ENCODE measurements at regions of chr17 and their contacts with region 1.

Region 1: GRCh38 chr17:29180034-29180787 is at the start of gene MYO18A:
- DNase-seq: peak; percentile 83
- ATAC-seq: peak; percentile 94
- H3K4me3 Mint-ChIP-seq: peak within 1 kb of the TSS; percentile 51
- H3K27ac Mint-ChIP-seq: no peak within 1 kb of the TSS
- H3K4me1 Mint-ChIP-seq: peaks cover 38% of the 10 kb centered on the region
- H3K27me3 Mint-ChIP-seq: peaks cover 10% of the 10 kb centered on the region
- total RNA-seq, gene MYO18A: 53.4 to 53.8 TPM

Region 2: GRCh38 chr17:28937044-28937729 is 243.0 kb before region 1 on chr17:
- CTCF ChIA-PET with region 1: no interaction called
- POLR2A ChIA-PET with region 1: no interaction called
- DNase-seq: no peak
- ATAC-seq: no peak
- H3K4me3 Mint-ChIP-seq: no peak overlapping the region
- H3K27ac Mint-ChIP-seq: no peak overlapping the region
- H3K4me1 Mint-ChIP-seq: peaks cover 62% of the 10 kb centered on the region
- H3K27me3 Mint-ChIP-seq: no peaks in the 10 kb centered on the region

Region 3: DNA sequence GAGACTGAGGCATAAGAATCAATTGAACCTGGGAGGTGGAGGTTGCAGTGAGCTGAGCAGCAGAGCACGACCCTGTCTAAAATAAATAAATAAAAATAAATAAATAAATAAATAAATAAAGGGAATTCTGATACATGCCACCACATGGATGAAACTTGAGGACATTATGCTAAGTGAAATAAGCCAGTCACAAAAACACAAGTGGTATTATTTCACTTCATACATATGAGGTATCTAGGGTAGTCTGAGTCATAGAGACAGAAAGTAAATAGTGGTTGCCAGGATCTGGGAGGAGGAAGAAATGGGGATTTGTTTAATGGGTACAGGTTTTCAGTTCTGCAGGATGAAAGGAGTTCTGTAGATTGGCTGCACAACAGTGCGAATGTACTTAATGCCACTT is 120.9 kb before region 1 on chr17:
- CTCF ChIA-PET with region 1: no interaction called
- POLR2A ChIA-PET with region 1: no interaction called
- DNase-seq: no peak
- ATAC-seq: no peak
- H3K4me3 Mint-ChIP-seq: no peak overlapping the region
- H3K27ac Mint-ChIP-seq: no peak overlapping the region
- H3K4me1 Mint-ChIP-seq: no peaks in the 10 kb centered on the region
- H3K27me3 Mint-ChIP-seq: peaks cover 8% of the 10 kb centered on the region

Region 4: DNA sequence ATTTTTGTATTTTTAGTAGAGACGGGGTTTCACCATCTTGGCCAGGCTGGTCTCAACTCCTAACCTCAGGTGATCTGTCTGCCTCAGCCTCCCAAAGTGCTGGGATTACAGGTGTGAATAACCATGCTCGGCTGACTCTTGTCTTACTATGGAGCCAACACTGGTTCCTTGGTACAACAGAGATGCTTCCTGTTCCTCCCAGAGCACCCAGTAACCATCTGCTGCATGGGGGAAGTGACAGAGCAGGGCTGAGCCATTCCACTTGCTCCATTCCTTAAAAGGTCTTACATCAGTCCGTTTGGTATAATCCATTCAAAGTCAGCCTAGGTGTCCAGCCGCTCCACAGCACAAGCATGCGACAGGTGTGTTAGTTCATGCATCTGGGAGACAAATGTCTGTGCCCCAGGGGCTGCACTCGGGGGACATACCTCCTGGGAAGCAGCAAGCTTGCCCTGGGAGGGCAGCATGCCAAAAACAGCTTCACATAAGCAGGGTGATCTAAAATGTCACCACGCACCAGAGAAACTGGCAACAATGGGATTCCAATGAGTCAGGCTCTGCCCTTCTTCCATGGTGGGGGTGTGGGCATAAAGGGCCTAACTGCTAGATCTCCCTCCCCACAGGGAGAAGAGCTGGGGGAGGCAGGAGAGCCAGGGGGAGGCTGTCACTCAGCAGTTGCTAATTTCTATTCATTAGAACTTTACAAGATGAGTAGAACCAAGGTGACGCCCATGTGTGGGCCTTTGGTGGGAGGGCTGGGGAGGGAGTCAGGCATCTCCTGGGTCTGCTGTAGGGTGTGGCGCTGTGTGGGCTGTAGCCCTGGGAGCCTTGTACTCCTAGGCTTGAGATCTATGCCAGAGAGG is 101.8 kb before region 1 on chr17:
- CTCF ChIA-PET with region 1: no interaction called
- POLR2A ChIA-PET with region 1: no interaction called
- DNase-seq: no peak
- ATAC-seq: no peak
- H3K4me3 Mint-ChIP-seq: no peak overlapping the region
- H3K27ac Mint-ChIP-seq: no peak overlapping the region
- H3K4me1 Mint-ChIP-seq: no peaks in the 10 kb centered on the region
- H3K27me3 Mint-ChIP-seq: no peaks in the 10 kb centered on the region

Region 5: DNA sequence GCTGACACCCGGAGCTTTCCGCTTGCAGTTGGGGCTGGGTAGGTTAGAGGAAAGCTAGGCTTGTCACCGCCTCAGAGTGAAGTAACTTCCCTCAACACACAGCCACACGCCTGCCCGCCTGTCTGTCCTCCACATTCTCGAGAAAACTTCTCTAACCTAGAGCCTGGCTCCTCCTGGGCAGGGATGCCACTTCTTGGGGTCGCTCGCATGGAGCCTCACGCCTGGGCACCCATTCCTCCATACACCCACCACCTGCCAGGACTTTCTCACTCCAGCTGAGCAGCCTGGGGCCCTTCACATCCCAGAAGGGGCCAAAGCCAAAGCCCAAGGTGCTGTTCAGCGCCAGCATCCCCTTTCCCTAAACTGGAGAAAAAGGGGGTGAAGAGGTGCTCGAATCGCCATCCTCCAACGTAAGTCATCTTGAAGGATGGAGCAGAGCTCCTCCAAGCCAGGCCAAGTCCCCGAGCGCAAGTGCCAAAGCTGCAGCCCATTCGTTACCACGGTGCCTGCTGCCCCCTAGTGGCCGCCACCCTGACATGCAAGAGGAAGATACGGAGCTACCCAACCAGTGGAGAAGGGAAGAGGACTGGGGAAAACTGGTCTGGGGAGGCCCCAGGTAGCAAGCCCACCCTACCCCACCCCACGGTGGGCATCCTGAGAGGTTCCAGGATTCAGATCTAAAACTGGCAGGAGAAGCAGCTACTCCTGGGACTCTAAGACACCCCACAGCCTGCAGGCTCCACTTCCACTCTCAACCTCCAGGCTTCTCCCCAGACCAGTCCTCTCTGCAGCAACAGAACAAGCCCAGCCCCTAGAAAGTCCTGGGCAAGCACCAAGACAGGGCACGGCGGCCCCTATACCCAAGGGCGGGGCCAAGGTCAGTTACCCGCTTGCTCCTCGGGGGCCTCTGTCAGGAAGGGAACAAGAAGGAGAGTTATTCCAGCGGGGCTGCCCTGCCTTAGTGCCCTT is 63.1 kb before region 1 on chr17:
- CTCF ChIA-PET with region 1: interaction called, 10 read pairs
- POLR2A ChIA-PET with region 1: no interaction called
- DNase-seq: peak; percentile 81
- ATAC-seq: peak; percentile 59
- H3K4me3 Mint-ChIP-seq: no peak overlapping the region
- H3K27ac Mint-ChIP-seq: no peak overlapping the region
- H3K4me1 Mint-ChIP-seq: peaks cover 9% of the 10 kb centered on the region
- H3K27me3 Mint-ChIP-seq: no peaks in the 10 kb centered on the region

Region 6: DNA sequence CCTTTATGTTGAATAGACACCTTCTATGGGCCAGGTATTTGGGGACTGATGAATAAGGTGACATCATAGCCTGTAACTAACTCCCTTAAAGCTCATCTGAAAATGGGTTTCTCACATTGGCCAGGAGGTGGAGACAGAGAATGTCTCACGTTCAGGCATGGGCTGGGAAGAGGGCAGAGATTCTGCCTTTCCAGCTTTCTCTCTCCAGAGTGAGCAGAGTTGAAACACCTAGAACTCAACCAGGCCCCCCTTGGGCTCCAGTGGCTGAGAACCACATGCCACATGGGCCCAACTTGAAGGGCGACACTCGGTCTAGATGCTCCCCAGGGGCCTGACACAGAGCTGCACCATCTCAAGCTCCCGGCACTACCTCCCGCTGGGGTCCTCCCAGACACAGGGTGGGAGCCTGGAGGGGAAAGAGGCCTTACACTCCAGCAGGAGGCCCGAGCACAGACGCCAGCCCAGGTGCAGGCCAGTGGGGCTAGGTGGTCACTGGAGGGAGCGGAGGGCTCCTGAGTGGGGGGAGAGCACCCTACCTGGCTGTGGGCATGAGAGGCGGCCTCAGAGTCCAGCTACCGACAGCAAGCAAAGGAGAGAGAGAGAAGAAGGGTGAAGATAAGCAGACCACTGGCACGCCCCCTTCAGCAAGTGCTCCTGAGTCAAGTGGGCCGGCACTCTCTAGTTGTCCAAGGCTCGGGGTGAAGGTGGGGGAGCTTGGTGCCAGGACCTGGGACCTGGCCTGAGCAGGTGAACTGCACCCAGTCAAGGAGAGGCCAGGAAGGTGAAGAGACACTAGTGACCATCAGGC is 55.9 kb before region 1 on chr17:
- CTCF ChIA-PET with region 1: interaction called, 71 read pairs
- POLR2A ChIA-PET with region 1: no interaction called
- DNase-seq: peak; percentile 69
- ATAC-seq: peak; percentile 88
- H3K4me3 Mint-ChIP-seq: no peak overlapping the region
- H3K27ac Mint-ChIP-seq: peak overlapping the region; percentile 30
- H3K4me1 Mint-ChIP-seq: peaks cover 4% of the 10 kb centered on the region
- H3K27me3 Mint-ChIP-seq: no peaks in the 10 kb centered on the region

Region 7: GRCh38 chr17:29140051-29140621 is 40.1 kb before region 1 on chr17:
- CTCF ChIA-PET with region 1: interaction called, 342 read pairs
- POLR2A ChIA-PET with region 1: interaction called, 6 read pairs
- DNase-seq: peak; percentile 95
- ATAC-seq: peak; percentile 76
- H3K4me3 Mint-ChIP-seq: peak overlapping the region; percentile 92
- H3K27ac Mint-ChIP-seq: peak overlapping the region; percentile 98
- H3K4me1 Mint-ChIP-seq: peaks cover 70% of the 10 kb centered on the region
- H3K27me3 Mint-ChIP-seq: no peaks in the 10 kb centered on the region

Region 8: DNA sequence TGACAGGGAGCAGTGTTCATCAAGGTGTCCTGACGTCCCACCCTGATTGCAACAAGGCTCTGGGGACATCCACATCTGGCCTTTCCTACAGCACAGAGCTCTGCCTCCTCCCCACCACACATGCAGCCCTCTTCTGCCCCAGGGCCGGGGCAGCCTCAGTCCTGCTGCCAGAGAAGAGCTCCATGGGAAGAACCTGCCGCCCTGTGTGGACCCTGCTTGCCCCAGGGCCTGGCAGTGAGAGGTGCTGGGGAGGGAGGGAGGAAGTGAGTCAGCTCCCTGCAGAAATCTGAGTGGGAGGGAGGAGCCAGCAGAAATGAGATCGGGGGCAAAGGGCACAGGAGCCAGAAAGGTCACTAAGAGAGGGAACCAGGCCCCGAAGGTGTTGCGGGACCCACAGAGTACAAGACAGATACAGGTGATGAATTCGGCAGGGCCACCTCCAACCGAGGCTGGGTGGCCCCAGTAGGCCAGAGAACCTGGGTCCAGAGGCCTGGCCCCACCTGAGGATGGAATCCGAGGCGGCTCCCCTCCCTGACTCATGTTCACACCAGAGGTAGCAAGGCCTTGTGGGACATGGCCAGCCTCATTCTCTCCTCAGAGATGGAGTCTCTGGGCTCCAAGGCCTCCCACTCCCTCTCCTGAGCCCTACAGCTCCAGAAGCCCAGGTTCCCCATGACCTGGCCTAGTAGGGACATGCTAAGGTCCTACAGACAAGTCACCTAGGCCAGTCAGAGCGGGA is 24.8 kb before region 1 on chr17:
- CTCF ChIA-PET with region 1: interaction called, 342 read pairs
- POLR2A ChIA-PET with region 1: interaction called, 11 read pairs
- DNase-seq: peak; percentile 74
- ATAC-seq: peak; percentile 91
- H3K4me3 Mint-ChIP-seq: peak overlapping the region; percentile 20
- H3K27ac Mint-ChIP-seq: peak overlapping the region; percentile 84
- H3K4me1 Mint-ChIP-seq: peaks cover 55% of the 10 kb centered on the region
- H3K27me3 Mint-ChIP-seq: no peaks in the 10 kb centered on the region

Region 9: GRCh38 chr17:29162738-29163341 is 17.4 kb before region 1 on chr17:
- CTCF ChIA-PET with region 1: interaction called, 25 read pairs
- POLR2A ChIA-PET with region 1: interaction called, 4 read pairs
- DNase-seq: no peak
- ATAC-seq: no peak
- H3K4me3 Mint-ChIP-seq: no peak overlapping the region
- H3K27ac Mint-ChIP-seq: no peak overlapping the region
- H3K4me1 Mint-ChIP-seq: peaks cover 18% of the 10 kb centered on the region
- H3K27me3 Mint-ChIP-seq: no peaks in the 10 kb centered on the region

Region 10: DNA sequence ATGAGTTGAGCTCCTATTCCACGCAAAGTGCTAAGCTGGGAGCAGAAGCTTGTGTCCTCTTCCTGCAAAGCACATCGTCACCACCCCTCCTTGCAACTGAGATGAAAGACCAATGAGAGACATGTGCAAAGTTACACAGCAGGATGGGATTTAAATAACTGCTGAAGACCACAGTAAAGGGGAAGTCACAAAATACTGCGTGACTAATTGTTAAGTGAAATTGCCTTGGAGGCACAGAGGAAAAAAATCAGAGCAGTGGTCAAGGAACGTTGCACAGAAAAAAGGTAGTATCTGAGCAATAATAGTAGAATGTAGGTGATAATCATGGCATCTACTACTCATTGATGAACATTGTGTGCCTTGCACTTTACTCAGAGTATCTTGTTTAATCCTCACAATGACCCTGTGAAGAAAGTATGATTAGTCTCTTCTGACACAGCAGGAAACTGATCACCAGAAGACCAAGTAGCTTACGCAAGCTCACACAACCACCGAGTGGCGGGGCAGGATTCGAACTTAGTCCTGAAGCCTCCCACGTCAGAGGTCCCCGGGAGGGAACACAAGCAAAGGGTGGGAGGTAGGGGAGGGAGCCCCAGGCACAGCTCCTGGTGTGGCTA is 15.4 kb after region 1 on chr17:
- CTCF ChIA-PET with region 1: interaction called, 60 read pairs
- POLR2A ChIA-PET with region 1: no interaction called
- DNase-seq: no peak
- ATAC-seq: no peak
- H3K4me3 Mint-ChIP-seq: no peak overlapping the region
- H3K27ac Mint-ChIP-seq: no peak overlapping the region
- H3K4me1 Mint-ChIP-seq: peaks cover 11% of the 10 kb centered on the region
- H3K27me3 Mint-ChIP-seq: peaks cover 23% of the 10 kb centered on the region

Measured in activated CD8-positive, alpha-beta T cell treated with anti-CD3 and anti-CD28 coated beads, Interleukin-2, amount 10 ng/mL, durations not matched to agents 7 days and 5 days (primary cell).